ENCODE measurements at regions of chr3 and their contacts with region 1.

Region 1: GRCh38 chr3:158644345-158644908 is at the start of gene GFM1:
- DNase-seq: peak; percentile 94
- ATAC-seq: peak; percentile 97
- H3K4me3 Mint-ChIP-seq: peak within 1 kb of the TSS; percentile 92
- H3K27ac Mint-ChIP-seq: peak within 1 kb of the TSS; percentile 83
- H3K4me1 Mint-ChIP-seq: peaks cover 32% of the 10 kb centered on the region
- H3K27me3 Mint-ChIP-seq: no peaks in the 10 kb centered on the region
- total RNA-seq, gene GFM1: 50.5 to 51.4 TPM

Region 2: DNA sequence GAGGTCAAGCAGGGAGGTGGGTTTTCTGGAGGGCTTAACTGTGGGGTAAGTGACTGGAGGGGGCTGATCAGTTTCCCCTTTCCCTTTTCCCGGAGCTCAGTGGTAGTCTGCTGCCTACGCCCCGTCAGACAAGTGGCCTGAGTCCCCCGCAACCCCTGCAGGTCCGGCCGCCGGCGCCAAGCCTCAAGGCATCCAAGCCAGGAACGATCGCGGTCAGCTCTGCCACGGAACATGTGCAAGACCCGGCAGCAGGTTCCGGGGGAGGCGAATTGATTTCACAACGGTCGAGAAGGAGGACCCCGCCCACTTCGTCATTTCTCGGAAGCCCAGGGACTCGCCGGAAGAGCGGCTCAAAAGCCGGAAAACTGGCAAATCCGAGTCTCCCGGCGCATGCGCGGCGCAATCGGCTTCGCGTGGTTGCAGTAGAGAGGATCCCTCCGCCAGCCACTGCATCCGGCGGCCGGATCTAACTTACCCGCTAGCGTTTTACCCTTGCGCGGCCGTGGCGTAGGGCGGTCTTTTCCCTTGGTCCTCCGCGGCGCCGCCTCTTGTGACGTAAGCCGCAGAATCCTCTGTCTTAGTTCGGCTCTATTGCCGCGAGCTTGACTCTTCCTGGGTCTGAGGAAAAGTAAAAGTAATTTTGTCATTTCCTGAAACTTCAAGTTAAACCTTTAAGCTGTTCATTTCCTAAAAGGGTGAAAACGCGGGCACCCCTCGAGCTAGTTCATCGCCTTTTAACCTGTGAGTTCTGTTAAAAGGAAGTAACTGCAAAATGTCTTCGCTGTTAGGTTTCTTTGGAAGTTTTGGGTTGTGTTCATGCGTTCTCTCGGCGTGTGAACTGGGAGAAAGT is 1469.6 kb before region 1 on chr3:
- CTCF ChIA-PET with region 1: no interaction called
- POLR2A ChIA-PET with region 1: no interaction called
- intact Hi-C with region 1: loop called in 1 of 2 experiments (anchors 10 kb)
- DNase-seq: peak; percentile 99
- ATAC-seq: peak; percentile 95
- H3K4me3 Mint-ChIP-seq: peak overlapping the region; percentile 94
- H3K27ac Mint-ChIP-seq: peak overlapping the region; percentile 99
- H3K4me1 Mint-ChIP-seq: peaks cover 20% of the 10 kb centered on the region
- H3K27me3 Mint-ChIP-seq: no peaks in the 10 kb centered on the region

Region 3: GRCh38 chr3:158109804-158110657 is 534.4 kb before region 1 on chr3 and contains the start of gene RSRC1:
- CTCF ChIA-PET with region 1: interaction called, 7 read pairs
- POLR2A ChIA-PET with region 1: interaction called, 3 read pairs
- intact Hi-C with region 1: loop called (anchors 2 to 10 kb)
- DNase-seq: peak; percentile 88
- ATAC-seq: peak; percentile 80
- H3K4me3 Mint-ChIP-seq: peak within 1 kb of the TSS; percentile 95
- H3K27ac Mint-ChIP-seq: peak within 1 kb of the TSS; percentile 81
- H3K4me1 Mint-ChIP-seq: peaks cover 52% of the 10 kb centered on the region
- H3K27me3 Mint-ChIP-seq: peaks cover 26% of the 10 kb centered on the region
- total RNA-seq, gene RSRC1: 44.9 to 61.6 TPM

Region 4: DNA sequence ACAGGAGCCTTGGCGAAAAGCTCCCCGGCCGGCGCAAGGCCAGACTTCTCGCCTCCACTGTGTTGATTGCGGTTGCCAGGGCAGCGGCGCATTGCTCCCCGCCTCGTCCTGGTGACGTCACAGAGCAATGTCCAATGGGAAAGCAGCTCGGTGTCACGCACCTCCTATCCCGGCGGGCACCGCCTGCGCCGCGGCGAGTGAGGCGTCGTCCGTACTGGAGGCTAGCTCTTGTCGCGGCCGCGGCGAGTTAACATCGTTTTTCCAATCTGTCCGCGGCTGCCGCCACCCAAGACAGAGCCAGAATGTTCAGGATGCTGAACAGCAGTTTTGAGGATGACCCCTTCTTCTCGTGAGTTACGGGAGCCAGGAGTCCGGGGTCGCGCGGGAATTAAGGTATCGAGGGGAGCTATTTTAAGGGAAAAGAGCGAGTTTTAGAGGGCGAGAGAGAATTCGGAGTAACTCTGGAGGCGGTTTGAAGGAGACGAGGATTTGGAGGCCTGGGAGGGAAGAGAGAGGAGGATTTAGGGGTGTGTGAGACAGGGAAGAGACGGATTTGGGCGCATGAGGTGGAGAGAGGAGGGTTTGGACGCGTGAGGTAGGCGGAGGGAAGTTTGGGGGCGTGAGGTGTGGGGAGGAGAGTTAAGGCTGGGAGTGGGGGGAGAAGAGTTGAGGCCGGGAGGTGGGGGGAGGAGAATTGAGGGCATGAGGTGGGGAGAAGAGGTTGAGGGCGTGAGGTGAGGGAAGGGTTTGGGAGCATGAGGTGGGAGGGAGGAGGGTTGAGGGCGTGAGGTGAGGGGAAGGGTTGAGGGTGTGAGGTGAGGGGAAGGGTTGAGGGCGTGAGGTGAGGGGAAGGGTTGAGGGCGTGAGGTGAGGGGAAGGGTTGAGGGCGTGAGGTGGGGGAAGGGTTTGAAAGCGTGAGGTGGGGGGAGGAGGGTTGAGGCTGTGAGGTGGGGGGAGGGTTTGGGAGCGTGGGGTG is 73.1 kb before region 1 on chr3 and contains the start of gene MLF1:
- CTCF ChIA-PET with region 1: interaction called, 7 read pairs
- POLR2A ChIA-PET with region 1: interaction called, 3 read pairs
- intact Hi-C with region 1: loop called in 1 of 2 experiments (anchors 2 kb)
- DNase-seq: peak; percentile 93
- ATAC-seq: peak; percentile 100
- H3K4me3 Mint-ChIP-seq: peak within 1 kb of the TSS; percentile 78
- H3K27ac Mint-ChIP-seq: peak within 1 kb of the TSS; percentile 63
- H3K4me1 Mint-ChIP-seq: peaks cover 12% of the 10 kb centered on the region
- H3K27me3 Mint-ChIP-seq: peaks cover 28% of the 10 kb centered on the region
- total RNA-seq, gene MLF1: 2.4 to 3.4 TPM

Region 5: GRCh38 chr3:158672293-158673176 is 28.1 kb after region 1 on chr3 and contains the start of gene LXN:
- CTCF ChIA-PET with region 1: interaction called, 17 read pairs
- POLR2A ChIA-PET with region 1: no interaction called
- intact Hi-C with region 1: loop called (anchors 1 to 2 kb)
- DNase-seq: peak; percentile 92
- ATAC-seq: peak; percentile 100
- H3K4me3 Mint-ChIP-seq: peak within 1 kb of the TSS; percentile 85
- H3K27ac Mint-ChIP-seq: peak within 1 kb of the TSS; percentile 91
- H3K4me1 Mint-ChIP-seq: peaks cover 18% of the 10 kb centered on the region
- H3K27me3 Mint-ChIP-seq: no peaks in the 10 kb centered on the region
- total RNA-seq, gene LXN: 12.5 to 13.9 TPM

Region 6: DNA sequence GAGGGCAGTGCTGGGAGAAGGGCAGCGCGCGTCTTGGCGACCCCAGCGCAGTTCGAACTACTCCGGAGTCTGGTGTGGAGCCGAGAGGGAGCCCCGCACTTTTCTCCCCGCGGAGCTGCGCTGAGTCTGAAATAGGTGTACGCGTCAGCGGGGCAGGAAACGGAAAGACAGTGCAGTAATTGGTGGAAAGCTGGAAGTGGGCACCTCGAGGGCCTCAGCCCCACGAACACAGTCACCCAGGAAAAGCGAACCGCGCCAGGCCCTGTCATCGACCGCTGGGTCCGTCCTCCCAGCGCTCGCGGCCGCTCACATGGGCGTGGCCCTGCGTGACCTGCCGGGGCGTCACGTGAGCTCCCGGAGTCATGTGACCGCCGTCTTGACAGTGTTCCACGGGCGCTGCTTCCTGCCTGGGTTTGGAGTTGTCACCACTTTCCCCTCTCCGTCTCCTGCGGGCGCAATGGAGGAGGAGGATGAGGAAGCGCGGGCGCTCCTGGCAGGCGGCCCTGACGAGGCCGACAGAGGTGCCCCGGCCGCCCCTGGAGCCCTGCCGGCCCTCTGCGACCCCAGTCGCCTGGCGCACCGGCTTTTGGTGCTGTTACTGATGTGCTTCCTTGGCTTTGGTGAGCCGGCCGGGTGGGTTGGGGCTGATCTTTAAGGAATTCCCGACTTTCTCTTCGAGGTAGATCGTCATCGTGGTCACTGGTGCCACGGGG is 157.4 kb after region 1 on chr3 and contains the start of gene MFSD1:
- CTCF ChIA-PET with region 1: interaction called, 12 read pairs
- POLR2A ChIA-PET with region 1: no interaction called
- intact Hi-C with region 1: loop called in 1 of 2 experiments (anchors 5 kb)
- DNase-seq: peak; percentile 94
- ATAC-seq: peak; percentile 92
- H3K4me3 Mint-ChIP-seq: peak within 1 kb of the TSS; percentile 81
- H3K27ac Mint-ChIP-seq: peak within 1 kb of the TSS; percentile 87
- H3K4me1 Mint-ChIP-seq: peaks cover 22% of the 10 kb centered on the region
- H3K27me3 Mint-ChIP-seq: no peaks in the 10 kb centered on the region
- total RNA-seq, gene MFSD1: 6.9 to 13.1 TPM

Measured in activated CD4-positive, alpha-beta T cell treated with anti-CD3 and anti-CD28 coated beads for 36 hours (primary cell).